CD8-positive, alpha-beta T cell (primary cell): ENCODE measurements at regions of chr11 and their contacts with region 1.

Region 1: GRCh38 chr11:63478896-63479295 is 12.1 kb downstream of the PLAAT5 start:
- DNase-seq: peak; percentile 23 to 78 (median 56)
- ATAC-seq: peak; percentile 78
- H3K4me3 ChIP-seq: no peak overlapping the region
- H3K4me3 Mint-ChIP-seq: no peak overlapping the region
- H3K27ac ChIP-seq: no peak overlapping the region
- H3K27ac Mint-ChIP-seq: no peak overlapping the region
- H3K4me1 ChIP-seq: peaks cover 3% of the 10 kb centered on the region
- H3K4me1 Mint-ChIP-seq: no peaks in the 10 kb centered on the region
- H3K27me3 ChIP-seq: no peaks in the 10 kb centered on the region
- H3K27me3 Mint-ChIP-seq: no peaks in the 10 kb centered on the region
- CTCF ChIP-seq: peak; percentile 91

Region 2: DNA sequence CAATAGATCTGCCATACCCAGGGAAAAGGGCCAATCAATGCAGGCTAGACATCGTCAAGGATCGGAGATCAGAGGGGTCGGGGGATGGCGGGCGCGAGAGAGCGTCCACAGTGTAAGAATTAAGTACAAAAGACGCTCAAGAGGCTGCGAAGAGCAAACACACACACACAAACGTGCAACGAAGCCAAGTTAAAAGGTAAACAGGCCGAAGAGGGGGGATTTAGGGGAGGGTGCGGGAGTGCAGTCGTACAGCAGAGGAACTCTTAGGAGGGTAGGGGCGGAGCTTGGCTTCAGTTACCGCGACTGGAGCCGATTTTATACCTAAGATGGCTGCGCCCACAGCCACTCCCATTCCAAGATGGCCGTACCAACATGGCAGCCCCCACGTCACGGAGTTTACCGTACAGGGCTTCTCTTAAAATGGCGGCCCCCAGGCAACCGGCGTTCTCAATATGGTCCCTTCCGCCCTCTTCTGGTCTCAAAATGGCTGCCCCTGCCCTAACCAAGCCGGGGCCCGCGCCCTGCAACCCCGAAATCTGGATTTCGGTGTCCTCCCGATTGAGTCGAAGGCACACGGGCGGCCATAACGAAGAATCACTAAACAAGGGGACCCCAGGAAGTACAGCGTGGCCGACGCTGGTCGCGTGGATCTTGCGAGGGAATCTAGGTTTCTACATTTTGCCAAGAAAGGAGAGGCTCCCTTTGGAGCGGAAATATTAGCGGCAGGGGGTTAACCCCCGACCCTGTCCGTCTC is 769.5 kb before region 1 on chr11:
- CTCF ChIA-PET with region 1: no interaction called
- POLR2A ChIA-PET with region 1: no interaction called
- intact Hi-C with region 1: no loop called
- DNase-seq: peak; percentile 94 to 99 (median 97)
- ATAC-seq: peak; percentile 78
- H3K4me3 ChIP-seq: peak overlapping the region; percentile 60 to 89
- H3K4me3 Mint-ChIP-seq: peak overlapping the region; percentile 93
- H3K27ac ChIP-seq: peak overlapping the region; percentile 88
- H3K27ac Mint-ChIP-seq: peak overlapping the region; percentile 98
- H3K4me1 ChIP-seq: peaks cover 44% of the 10 kb centered on the region
- H3K4me1 Mint-ChIP-seq: peaks cover 59% of the 10 kb centered on the region
- H3K27me3 ChIP-seq: no peaks in the 10 kb centered on the region
- H3K27me3 Mint-ChIP-seq: no peaks in the 10 kb centered on the region
- CTCF ChIP-seq: no peak

Region 3: DNA sequence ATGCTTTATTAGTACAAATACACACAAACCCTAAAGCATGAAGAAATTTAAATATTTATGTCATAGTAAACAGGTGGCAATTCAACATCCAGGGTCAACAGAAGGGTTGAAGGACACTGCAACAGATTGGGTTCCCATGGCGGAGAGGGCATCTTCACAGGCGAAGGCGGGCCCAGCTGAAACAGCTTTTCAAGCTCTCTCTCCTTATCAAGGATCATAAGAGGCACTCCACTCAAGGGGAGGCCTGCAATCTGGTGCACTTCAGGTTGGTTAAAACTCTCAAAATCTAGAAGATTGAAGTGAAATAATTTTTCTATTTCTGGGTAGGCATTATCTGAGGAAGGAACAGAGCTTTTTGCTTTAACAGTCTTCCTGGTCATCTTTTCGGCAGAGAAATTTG is 446.4 kb before region 1 on chr11:
- CTCF ChIA-PET with region 1: interaction called, 5 read pairs
- POLR2A ChIA-PET with region 1: no interaction called
- intact Hi-C with region 1: loop called (anchors 5 to 10 kb)
- DNase-seq: no peak
- ATAC-seq: no peak
- H3K4me3 ChIP-seq: no peak overlapping the region
- H3K4me3 Mint-ChIP-seq: no peak overlapping the region
- H3K27ac ChIP-seq: no peak overlapping the region
- H3K27ac Mint-ChIP-seq: no peak overlapping the region
- H3K4me1 ChIP-seq: no peaks in the 10 kb centered on the region
- H3K4me1 Mint-ChIP-seq: no peaks in the 10 kb centered on the region
- H3K27me3 ChIP-seq: peaks cover 0 to 3% of the 10 kb centered on the region in 2 experiments
- H3K27me3 Mint-ChIP-seq: peaks cover 30% of the 10 kb centered on the region
- CTCF ChIP-seq: no peak

Region 4: DNA sequence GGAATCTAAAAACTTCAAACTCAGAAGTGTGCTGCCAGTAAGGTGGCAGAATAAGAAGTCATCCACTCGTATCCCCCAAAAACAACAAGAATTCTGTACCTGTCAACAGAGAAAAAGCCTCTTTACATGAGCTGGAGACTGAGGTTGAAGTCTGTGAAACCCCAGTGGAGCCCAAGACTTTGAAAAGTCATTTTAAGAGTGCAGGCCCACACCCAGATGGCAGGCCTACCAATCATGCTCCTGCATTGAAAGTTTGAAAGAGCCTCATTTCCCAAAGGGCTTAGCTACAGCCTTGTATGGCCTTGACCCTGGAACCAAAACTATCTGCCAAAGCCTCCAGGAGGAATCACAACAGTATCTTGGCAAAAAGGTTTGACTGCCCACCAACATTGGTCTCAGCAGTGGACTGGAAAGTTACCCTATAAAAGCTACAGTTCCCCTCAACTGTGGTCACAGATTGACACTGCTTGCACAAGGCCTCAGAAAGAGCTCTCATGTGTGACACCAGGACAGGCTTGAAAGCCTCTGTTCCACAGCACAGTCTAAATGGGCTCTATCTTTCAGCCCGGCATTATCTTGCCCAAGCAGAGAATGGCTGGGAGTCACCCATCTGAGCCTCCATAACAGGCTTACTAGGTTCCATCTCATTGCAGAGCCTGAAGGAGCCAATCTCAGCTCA is 61.6 kb before region 1 on chr11:
- CTCF ChIA-PET with region 1: no interaction called
- POLR2A ChIA-PET with region 1: no interaction called
- intact Hi-C with region 1: no loop called
- DNase-seq: no peak
- ATAC-seq: no peak
- H3K4me3 ChIP-seq: no peak overlapping the region
- H3K4me3 Mint-ChIP-seq: no peak overlapping the region
- H3K27ac ChIP-seq: no peak overlapping the region
- H3K27ac Mint-ChIP-seq: no peak overlapping the region
- H3K4me1 ChIP-seq: peaks cover 7% of the 10 kb centered on the region
- H3K4me1 Mint-ChIP-seq: peaks cover 19% of the 10 kb centered on the region
- H3K27me3 ChIP-seq: no peaks in the 10 kb centered on the region
- H3K27me3 Mint-ChIP-seq: peaks cover 2% of the 10 kb centered on the region
- CTCF ChIP-seq: no peak

Region 5: GRCh38 chr11:63443716-63444115 is 35.2 kb before region 1 on chr11:
- CTCF ChIA-PET with region 1: no interaction called
- POLR2A ChIA-PET with region 1: no interaction called
- intact Hi-C with region 1: no loop called
- DNase-seq: no peak
- ATAC-seq: no peak
- H3K4me3 ChIP-seq: no peak overlapping the region
- H3K4me3 Mint-ChIP-seq: no peak overlapping the region
- H3K27ac ChIP-seq: no peak overlapping the region
- H3K27ac Mint-ChIP-seq: no peak overlapping the region
- H3K4me1 ChIP-seq: no peaks in the 10 kb centered on the region
- H3K4me1 Mint-ChIP-seq: peaks cover 13% of the 10 kb centered on the region
- H3K27me3 ChIP-seq: no peaks in the 10 kb centered on the region
- H3K27me3 Mint-ChIP-seq: no peaks in the 10 kb centered on the region
- CTCF ChIP-seq: no peak

Region 6: DNA sequence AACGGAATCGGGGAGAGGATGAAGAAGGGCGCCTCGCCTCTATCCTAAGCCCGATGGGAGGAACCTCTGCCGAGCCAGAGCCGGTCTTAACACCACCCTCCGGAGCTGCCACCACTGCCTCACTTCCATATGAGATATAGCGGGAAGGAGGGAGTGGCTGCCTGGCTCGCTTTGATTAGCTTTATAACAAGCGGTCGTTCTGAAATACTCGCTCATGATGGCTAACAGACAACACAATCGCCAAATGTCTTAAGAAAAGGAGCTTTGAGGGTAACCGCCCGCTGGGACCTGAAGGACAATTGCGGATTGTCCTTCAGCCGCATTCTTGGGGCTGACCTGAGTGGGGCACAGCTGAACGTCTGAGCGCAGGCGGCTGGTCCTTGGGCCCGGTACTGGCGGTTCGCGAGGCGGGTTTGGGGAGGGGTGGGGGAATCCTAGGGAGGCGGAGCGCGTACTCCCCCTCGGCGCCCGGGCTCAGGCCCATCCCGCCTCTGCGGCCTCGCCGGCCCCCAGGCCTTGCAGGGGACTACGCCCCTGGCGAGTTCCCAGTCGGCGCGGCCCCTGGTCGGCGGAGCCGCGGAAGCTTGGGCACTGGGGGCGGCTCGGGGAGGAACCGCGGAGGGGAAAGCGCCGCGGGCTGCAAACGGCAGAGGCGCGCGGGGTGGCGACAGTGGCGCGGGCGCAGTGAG is 11.8 kb after region 1 on chr11 and contains the start of gene PLAAT5:
- CTCF ChIA-PET with region 1: interaction called, 30 read pairs
- POLR2A ChIA-PET with region 1: interaction called, 3 read pairs
- intact Hi-C with region 1: no loop called
- DNase-seq: peak in 6 of 9 experiments; percentile 13 to 63 (median 32)
- ATAC-seq: peak; percentile 55
- H3K4me3 ChIP-seq: peak within 1 kb of the TSS; percentile 37 to 44
- H3K4me3 Mint-ChIP-seq: peak within 1 kb of the TSS; percentile 82
- H3K27ac ChIP-seq: no peak within 1 kb of the TSS
- H3K27ac Mint-ChIP-seq: peak within 1 kb of the TSS; percentile 67
- H3K4me1 ChIP-seq: peaks cover 6% of the 10 kb centered on the region
- H3K4me1 Mint-ChIP-seq: peaks cover 17% of the 10 kb centered on the region
- H3K27me3 ChIP-seq: peaks cover 0 to 4% of the 10 kb centered on the region in 2 experiments
- H3K27me3 Mint-ChIP-seq: peaks cover 17% of the 10 kb centered on the region
- CTCF ChIP-seq: no peak
- total RNA-seq, gene PLAAT5: not detected

Region 7: DNA sequence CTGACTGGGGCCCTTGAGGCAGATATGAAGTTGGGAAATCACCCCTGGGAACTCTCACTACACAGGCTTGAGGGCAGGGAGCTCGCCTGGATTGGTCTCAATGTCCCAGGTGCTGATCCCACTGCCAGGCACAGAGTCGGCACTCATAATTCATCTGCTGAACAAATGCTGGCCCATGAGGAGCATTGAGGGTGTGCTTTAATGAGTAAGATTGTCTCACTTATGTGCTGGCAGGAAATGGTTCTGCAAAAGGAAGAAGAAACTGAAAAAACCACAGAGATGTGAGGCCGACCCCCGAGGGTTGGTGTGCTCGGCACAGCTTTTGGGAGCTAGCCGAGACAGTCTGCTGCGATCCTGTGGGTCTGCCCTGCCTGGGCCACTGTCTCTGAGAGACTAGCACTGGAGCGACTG is 74.8 kb after region 1 on chr11:
- CTCF ChIA-PET with region 1: interaction called, 26 read pairs
- POLR2A ChIA-PET with region 1: interaction called, 3 read pairs
- intact Hi-C with region 1: no loop called
- DNase-seq: peak in 8 of 9 experiments; percentile 48 to 89 (median 76)
- ATAC-seq: peak; percentile 80
- H3K4me3 ChIP-seq: peak overlapping the region; percentile 15 to 17
- H3K4me3 Mint-ChIP-seq: peak overlapping the region; percentile 81
- H3K27ac ChIP-seq: peak overlapping the region; percentile 55 to 88
- H3K27ac Mint-ChIP-seq: peak overlapping the region; percentile 99
- H3K4me1 ChIP-seq: peaks cover 49% of the 10 kb centered on the region
- H3K4me1 Mint-ChIP-seq: peaks cover 74% of the 10 kb centered on the region
- H3K27me3 ChIP-seq: no peaks in the 10 kb centered on the region
- H3K27me3 Mint-ChIP-seq: no peaks in the 10 kb centered on the region
- CTCF ChIP-seq: no peak

Region 8: GRCh38 chr11:63621931-63622782 is 143.3 kb after region 1 on chr11:
- CTCF ChIA-PET with region 1: interaction called, 24 read pairs
- POLR2A ChIA-PET with region 1: no interaction called
- intact Hi-C with region 1: no loop called
- DNase-seq: no peak
- ATAC-seq: no peak
- H3K4me3 ChIP-seq: no peak overlapping the region
- H3K4me3 Mint-ChIP-seq: no peak overlapping the region
- H3K27ac ChIP-seq: no peak overlapping the region
- H3K27ac Mint-ChIP-seq: no peak overlapping the region
- H3K4me1 ChIP-seq: peaks cover 6% of the 10 kb centered on the region
- H3K4me1 Mint-ChIP-seq: peaks cover 7% of the 10 kb centered on the region
- H3K27me3 ChIP-seq: no peaks in the 10 kb centered on the region
- H3K27me3 Mint-ChIP-seq: no peaks in the 10 kb centered on the region
- CTCF ChIP-seq: no peak

Region 9: DNA sequence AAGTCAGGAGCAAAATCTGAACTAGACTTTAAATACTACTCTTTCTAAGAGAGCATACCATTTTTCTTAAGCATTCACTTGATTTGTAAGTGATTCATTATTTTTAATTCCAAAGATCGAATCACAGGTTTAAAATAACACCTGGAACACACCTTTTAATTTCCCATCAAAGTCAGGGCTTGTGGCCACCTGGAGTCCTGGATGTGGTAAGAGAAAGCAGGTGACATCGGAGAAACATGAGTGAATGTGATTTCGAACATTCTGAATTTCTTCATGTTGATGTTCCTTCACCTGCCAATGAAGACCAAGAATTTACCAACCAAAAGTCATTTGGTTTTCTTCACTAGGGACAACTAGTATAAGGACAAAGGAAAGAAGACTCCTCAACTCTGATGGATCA is 164.3 kb after region 1 on chr11:
- CTCF ChIA-PET with region 1: interaction called, 228 read pairs
- POLR2A ChIA-PET with region 1: interaction called, 4 read pairs
- intact Hi-C with region 1: no loop called
- DNase-seq: no peak
- ATAC-seq: no peak
- H3K4me3 ChIP-seq: no peak overlapping the region
- H3K4me3 Mint-ChIP-seq: no peak overlapping the region
- H3K27ac ChIP-seq: no peak overlapping the region
- H3K27ac Mint-ChIP-seq: peak overlapping the region; percentile 55
- H3K4me1 ChIP-seq: no peaks in the 10 kb centered on the region
- H3K4me1 Mint-ChIP-seq: peaks cover 3% of the 10 kb centered on the region
- H3K27me3 ChIP-seq: no peaks in the 10 kb centered on the region
- H3K27me3 Mint-ChIP-seq: no peaks in the 10 kb centered on the region
- CTCF ChIP-seq: no peak